MCF 10A (cell line): ENCODE measurements at regions of chr1 and their contacts with region 1.

Region 1: DNA sequence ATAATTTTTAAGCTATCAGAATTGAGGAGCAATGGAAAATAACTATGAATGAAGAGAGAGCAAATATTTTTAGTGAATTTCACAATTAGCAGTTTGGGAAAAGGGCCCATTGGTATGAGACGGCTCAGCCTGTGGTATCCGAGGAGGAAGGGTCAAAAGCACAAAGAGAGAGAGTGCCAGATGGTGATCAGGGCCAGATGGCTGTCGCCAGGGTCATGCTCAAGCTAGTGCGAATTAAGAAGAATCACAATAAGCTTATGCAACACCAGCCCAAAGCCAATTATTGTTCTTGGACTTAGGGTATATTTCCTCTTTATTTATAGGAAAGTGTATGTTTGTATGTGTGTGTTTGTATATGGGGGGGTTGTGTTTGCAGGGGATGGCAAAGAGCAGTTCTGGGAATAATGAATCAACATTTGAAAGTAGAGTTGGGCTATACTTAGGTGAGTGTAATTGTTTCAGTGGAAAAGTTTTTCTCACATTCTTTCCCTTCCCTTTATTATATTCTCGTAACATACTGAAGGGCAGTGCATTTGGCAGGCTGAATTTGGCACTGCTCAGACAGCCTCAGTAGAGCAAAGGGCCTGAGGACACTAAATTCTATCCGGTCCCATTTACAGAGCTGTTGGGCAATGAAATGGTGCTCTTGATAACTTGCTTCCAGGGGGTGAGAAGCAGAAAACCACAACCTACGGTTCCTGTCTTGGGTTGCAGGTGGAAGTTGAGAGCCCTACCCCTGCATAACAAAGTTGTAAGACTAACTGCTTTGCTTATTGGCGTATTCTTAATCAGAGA is 19.5 kb upstream of the DDR2 start:
- DNase-seq: peak; percentile 63
- H3K4me3 Mint-ChIP-seq: no peak overlapping the region
- H3K27ac Mint-ChIP-seq: peak overlapping the region; percentile 66
- H3K4me1 Mint-ChIP-seq: peaks cover 5% of the 10 kb centered on the region
- H3K27me3 Mint-ChIP-seq: no peaks in the 10 kb centered on the region
- CTCF ChIP-seq: no peak

Region 2: GRCh38 chr1:161970633-161971032 is 642.2 kb before region 1 on chr1:
- CTCF ChIA-PET with region 1: no interaction called
- POLR2A ChIA-PET with region 1: no interaction called
- intact Hi-C with region 1: no loop called
- DNase-seq: no peak
- H3K4me3 Mint-ChIP-seq: no peak overlapping the region
- H3K27ac Mint-ChIP-seq: no peak overlapping the region
- H3K4me1 Mint-ChIP-seq: no peaks in the 10 kb centered on the region
- H3K27me3 Mint-ChIP-seq: peaks cover 19% of the 10 kb centered on the region
- CTCF ChIP-seq: no peak

Region 3: GRCh38 chr1:162412002-162412401 is 200.8 kb before region 1 on chr1 and contains the start of gene SH2D1B:
- CTCF ChIA-PET with region 1: no interaction called
- POLR2A ChIA-PET with region 1: no interaction called
- intact Hi-C with region 1: no loop called
- DNase-seq: peak; percentile 26
- H3K4me3 Mint-ChIP-seq: no peak within 1 kb of the TSS
- H3K27ac Mint-ChIP-seq: no peak within 1 kb of the TSS
- H3K4me1 Mint-ChIP-seq: peaks cover 13% of the 10 kb centered on the region
- H3K27me3 Mint-ChIP-seq: no peaks in the 10 kb centered on the region
- CTCF ChIP-seq: no peak
- total RNA-seq, gene SH2D1B: not detected in 2 replicates

Region 4: DNA sequence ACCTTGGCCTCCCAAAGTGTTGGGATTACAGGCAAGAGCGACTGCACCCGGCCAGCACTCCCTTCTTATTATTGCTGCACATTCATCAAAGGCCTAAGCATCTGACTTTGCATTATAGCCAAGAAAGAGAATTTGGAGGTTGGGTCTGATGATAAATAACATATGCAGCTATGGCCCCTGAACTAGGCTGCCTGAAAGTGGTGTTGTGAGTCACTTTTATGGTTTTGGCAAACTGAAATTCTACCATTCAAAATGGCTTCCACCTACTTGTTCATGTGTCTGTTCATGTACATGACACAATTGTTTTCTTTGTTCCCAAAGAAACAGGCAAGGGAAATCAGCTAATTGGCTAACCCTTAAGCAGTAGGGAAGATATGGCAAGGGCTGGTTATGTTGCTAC is 76.3 kb before region 1 on chr1:
- CTCF ChIA-PET with region 1: interaction called, 10 read pairs
- POLR2A ChIA-PET with region 1: interaction called, 3 read pairs
- intact Hi-C with region 1: no loop called
- DNase-seq: peak; percentile 30
- H3K4me3 Mint-ChIP-seq: no peak overlapping the region
- H3K27ac Mint-ChIP-seq: no peak overlapping the region
- H3K4me1 Mint-ChIP-seq: peaks cover 25% of the 10 kb centered on the region
- H3K27me3 Mint-ChIP-seq: no peaks in the 10 kb centered on the region
- CTCF ChIP-seq: no peak

Region 5: DNA sequence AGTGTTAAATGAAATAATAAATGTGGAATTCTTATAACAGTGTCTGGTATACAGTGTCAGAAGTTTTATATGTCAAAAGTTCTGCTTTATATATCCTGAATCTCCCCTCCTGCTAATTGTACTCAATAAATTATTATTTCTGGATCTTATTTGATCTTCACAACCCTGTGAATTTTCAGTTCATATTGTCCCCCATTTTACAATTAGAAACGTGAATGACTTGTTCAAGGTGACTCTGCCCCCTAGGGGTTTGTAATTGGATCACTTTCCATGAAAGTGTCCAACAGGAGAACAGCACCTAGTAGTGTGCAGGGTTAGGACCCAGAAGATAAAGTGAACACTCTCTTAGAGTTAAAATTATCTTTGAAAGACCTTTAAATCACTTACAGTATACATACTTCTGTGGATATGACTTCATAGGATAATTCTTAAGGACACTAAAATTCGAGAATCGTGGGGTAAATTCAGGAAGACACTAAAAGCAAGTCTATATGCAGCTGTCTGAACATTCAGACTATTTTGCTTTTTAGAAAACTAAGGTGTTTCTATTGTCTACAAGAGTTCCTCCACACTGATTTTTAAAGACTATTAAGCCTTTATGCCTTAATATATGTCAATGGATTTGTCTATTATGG is 15.0 kb after region 1 on chr1:
- CTCF ChIA-PET with region 1: interaction called, 82 read pairs
- POLR2A ChIA-PET with region 1: interaction called, 3 read pairs
- intact Hi-C with region 1: no loop called
- DNase-seq: peak; percentile 71
- H3K4me3 Mint-ChIP-seq: no peak overlapping the region
- H3K27ac Mint-ChIP-seq: no peak overlapping the region
- H3K4me1 Mint-ChIP-seq: peaks cover 17% of the 10 kb centered on the region
- H3K27me3 Mint-ChIP-seq: no peaks in the 10 kb centered on the region
- CTCF ChIP-seq: peak; percentile 55

Region 6: GRCh38 chr1:162649583-162649982 is 36.8 kb after region 1 on chr1:
- CTCF ChIA-PET with region 1: interaction called, 23 read pairs
- POLR2A ChIA-PET with region 1: no interaction called
- intact Hi-C with region 1: no loop called
- DNase-seq: no peak
- H3K4me3 Mint-ChIP-seq: no peak overlapping the region
- H3K27ac Mint-ChIP-seq: no peak overlapping the region
- H3K4me1 Mint-ChIP-seq: no peaks in the 10 kb centered on the region
- H3K27me3 Mint-ChIP-seq: no peaks in the 10 kb centered on the region
- CTCF ChIP-seq: no peak

Region 7: DNA sequence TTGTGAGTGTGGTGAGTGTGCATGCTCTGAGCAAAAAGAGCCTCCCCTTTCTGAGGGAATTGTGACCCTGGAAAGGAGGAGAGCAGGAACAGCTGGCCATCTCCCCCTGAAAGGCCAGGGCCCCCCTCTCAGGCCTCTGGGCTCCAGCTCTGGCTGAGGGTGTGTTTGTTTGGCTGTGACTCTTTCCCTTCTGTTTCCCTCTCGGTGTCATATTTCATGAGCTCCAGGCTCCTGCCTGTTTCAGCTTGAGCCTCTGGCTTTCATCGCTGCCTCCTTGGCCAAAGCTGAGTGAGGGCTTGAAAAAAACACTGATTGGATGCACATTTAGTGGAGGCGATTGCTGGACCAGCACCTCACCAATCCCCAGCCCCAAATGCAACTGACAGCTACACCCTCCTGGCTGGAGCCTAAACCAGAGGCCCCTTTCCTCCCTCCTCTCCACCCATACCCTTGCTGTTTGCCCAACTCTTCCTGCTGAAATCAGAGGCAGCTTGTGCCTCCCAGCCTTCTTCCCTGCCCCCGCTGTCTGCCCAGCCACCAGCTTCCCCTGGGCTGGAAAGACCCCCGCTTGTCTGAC is 83.6 kb after region 1 on chr1:
- CTCF ChIA-PET with region 1: interaction called, 75 read pairs
- POLR2A ChIA-PET with region 1: no interaction called
- intact Hi-C with region 1: no loop called
- DNase-seq: peak; percentile 97
- H3K4me3 Mint-ChIP-seq: peak overlapping the region; percentile 10
- H3K27ac Mint-ChIP-seq: peak overlapping the region; percentile 36
- H3K4me1 Mint-ChIP-seq: peaks cover 33% of the 10 kb centered on the region
- H3K27me3 Mint-ChIP-seq: no peaks in the 10 kb centered on the region
- CTCF ChIP-seq: no peak

Region 8: DNA sequence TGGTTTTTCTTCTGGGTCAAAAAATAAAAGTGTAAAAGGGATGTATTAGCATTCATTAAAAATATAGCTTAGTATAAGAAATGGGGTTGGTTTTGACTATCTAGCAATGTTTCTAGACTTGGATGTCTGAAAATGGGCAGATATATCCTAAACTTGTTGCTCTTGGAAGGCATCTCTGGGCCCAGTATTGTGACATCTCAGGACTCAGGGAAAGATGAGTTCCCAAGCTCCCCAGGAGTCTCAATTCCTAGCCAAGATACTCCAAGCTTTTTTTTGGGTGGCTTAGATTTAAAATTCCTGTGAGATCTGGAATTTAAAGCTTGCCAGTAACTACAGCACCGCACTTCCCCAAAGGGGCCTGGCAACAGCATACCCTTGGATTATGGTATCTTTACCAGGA is 166.2 kb after region 1 on chr1:
- CTCF ChIA-PET with region 1: interaction called, 18 read pairs
- POLR2A ChIA-PET with region 1: no interaction called
- intact Hi-C with region 1: no loop called
- DNase-seq: no peak
- H3K4me3 Mint-ChIP-seq: no peak overlapping the region
- H3K27ac Mint-ChIP-seq: no peak overlapping the region
- H3K4me1 Mint-ChIP-seq: no peaks in the 10 kb centered on the region
- H3K27me3 Mint-ChIP-seq: no peaks in the 10 kb centered on the region
- CTCF ChIP-seq: no peak

Region 9: DNA sequence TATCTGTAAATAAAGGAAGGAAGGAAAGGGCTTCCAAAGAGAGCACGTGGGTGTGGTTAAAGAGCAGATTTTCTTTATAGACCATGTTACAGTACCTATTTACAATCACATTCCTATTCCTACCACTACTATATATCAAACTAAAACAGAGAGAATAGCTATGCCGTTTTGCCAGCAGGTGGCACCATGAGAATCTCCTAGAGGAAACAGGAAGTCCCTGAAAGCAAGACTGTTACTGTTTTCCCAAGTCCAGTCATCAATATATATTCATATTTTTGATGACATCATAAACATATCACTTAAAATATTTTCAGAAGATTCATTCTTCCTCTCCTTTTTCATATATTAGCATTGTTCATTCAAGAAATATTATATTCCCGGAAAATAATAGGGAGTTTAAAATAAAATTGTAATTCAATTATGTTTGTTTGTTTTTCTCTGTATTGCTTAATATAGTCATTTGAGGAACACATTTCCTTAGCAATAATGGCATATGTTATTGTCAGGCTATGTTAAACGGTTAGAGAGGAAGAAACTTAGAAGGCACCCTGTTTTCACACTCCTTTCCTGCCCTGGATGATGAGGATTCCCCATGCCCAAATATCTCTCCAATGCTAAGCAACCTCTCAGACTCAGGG is 241.6 kb after region 1 on chr1:
- CTCF ChIA-PET with region 1: interaction called, 14 read pairs
- POLR2A ChIA-PET with region 1: interaction called, 3 read pairs
- intact Hi-C with region 1: no loop called
- DNase-seq: peak; percentile 88
- H3K4me3 Mint-ChIP-seq: no peak overlapping the region
- H3K27ac Mint-ChIP-seq: no peak overlapping the region
- H3K4me1 Mint-ChIP-seq: peaks cover 32% of the 10 kb centered on the region
- H3K27me3 Mint-ChIP-seq: peaks cover 33% of the 10 kb centered on the region
- CTCF ChIP-seq: peak; percentile 71